ENCODE measurements at regions of chr9 and their contacts with region 1.

Region 1: DNA sequence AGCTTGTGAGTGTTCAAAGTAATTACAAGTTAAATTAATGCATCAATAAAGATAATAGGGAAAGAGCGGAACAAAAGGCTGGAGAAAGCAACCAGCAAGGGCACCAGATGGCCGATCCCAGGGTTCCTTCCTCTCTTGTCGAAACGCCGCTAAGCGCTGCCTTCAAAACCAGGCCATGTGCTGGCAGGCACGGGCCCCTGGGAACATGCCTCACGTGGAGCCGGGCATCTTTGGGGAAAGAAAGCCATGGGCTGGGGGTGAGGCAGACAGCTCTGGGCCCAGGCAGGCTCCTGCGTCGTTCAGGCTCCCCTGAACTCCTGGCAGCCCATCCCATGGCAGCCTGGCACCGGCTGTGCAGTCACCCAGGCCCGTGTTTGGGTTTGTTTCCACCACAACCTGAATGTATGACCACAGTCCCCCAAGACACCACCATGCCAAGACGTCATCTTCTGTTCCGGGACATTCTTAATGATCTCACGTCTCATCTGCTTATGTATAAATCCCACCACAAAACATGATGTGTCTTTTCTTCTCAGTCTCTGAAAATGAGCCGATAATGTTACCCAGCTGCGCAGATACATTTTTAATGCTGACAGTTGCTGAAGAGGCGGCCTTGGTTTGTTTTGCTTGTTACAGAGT is 110.4 kb upstream of the SARDH start:
- DNase-seq: no peak

Region 2: GRCh38 chr9:133835255-133835901 is 13.2 kb before region 1 on chr9:
- intact Hi-C with region 1: no loop called
- DNase-seq: no peak

Region 3: DNA sequence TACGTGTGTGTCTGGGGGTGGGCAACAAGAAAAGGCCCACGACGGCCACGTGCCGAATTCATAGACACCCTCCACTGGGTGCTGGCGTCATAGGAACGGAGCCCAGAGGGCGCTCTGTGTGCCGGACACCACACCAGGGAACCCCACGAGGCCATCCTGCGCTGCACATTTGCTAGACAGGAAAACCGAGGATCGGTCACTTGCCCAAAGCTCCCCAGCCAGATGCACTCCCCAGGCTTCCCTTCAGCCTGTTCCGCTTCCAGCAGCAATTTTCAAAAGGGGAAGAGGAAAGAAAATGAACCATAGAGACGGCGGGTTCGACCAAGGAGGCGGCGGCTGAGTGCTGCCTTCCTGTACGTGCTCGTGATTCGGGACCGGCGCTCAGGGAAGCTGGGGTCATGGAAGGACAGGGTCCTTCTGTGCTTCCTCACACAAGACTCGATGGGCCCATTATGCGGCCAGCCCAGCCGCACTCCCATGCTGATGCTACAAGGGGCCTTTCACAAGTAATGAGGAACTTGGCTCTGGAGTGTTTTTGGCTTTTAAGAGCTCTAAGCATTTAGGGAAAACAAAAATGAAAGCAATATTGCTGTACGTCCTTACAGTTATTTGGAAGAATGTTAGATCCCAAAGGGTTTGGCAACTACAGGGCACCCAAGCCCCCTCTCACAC is 14.1 kb after region 1 on chr9:
- intact Hi-C with region 1: loop called in 1 of 2 experiments (anchors 1 kb)
- DNase-seq: peak; percentile 90

Measured in posterior vena cava (tissue), 2 donors.